PC-3 (cell line): ENCODE measurements at regions of chr17 and their contacts with region 1.

Region 1: DNA sequence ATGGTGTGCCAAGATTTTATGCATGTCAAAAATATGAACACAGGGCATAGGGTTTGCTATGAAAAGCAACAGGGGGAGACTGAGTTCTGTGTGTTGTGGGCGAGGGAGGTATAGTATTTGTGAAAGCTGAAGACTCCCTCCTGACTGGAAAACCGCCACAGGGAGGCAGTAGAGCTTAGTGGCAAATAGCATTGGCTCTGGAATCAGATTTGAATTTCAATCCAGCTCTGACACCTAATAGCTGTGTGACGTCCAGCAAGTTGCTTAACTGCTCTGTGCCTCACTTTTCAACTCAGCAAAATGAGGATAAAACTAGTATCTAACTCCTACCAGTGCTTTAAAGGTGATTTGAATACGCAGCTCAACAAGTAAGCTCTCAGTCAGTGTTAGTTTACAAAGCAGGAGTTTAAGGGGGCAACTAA is 22.0 kb downstream of the KPNA2 start:
- DNase-seq: peak; percentile 61
- ATAC-seq: peak; percentile 82
- H3K4me3 ChIP-seq: no peak overlapping the region
- H3K27ac ChIP-seq: no peak overlapping the region
- H3K4me1 ChIP-seq: no peaks in the 10 kb centered on the region
- H3K27me3 ChIP-seq: no peaks in the 10 kb centered on the region
- CTCF ChIP-seq: peak; percentile 74

Region 2: DNA sequence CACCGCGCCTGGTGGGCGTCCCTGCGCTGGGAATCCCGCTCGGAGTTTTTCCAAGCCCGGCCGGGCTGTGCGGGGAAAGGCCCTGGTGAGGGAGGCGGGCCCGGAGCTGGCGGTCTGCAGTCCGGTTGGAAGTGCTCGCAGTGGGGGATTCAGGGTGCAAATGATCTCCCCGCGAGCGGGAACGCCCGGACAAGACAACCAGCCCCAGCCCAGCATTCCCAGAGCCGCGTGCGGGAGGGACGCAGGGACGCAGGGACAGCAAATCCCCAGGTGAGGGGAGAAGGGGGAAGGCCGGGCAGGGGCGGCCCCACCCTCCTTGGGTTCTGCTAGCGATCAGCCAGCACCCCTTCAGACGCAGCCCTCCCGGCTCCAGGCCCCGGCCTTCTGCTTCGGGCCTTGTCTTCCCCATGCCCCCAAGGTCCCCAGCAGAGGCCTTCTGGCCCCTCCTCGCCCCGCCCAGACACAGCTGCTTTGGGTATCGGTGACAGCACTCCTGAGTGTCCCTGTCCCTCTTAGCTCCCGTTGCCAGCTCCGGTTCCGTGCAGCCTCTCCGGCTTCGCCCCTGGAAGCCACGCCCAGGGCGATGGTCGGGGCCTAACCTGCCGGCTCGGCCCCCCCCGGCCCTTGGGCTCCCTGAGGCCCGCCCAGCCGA is 139.5 kb after region 1 on chr17:
- CTCF ChIA-PET with region 1: interaction called, 3 read pairs
- POLR2A ChIA-PET with region 1: no interaction called
- intact Hi-C with region 1: loop called (anchors 10 kb)
- DNase-seq: peak; percentile 37
- ATAC-seq: peak; percentile 7; the same call in 1 of the 2 replicates
- H3K4me3 ChIP-seq: peak overlapping the region; percentile 60
- H3K27ac ChIP-seq: no peak overlapping the region
- H3K4me1 ChIP-seq: peaks cover 28% of the 10 kb centered on the region
- H3K27me3 ChIP-seq: peaks cover 56% of the 10 kb centered on the region
- CTCF ChIP-seq: no peak

Region 3: DNA sequence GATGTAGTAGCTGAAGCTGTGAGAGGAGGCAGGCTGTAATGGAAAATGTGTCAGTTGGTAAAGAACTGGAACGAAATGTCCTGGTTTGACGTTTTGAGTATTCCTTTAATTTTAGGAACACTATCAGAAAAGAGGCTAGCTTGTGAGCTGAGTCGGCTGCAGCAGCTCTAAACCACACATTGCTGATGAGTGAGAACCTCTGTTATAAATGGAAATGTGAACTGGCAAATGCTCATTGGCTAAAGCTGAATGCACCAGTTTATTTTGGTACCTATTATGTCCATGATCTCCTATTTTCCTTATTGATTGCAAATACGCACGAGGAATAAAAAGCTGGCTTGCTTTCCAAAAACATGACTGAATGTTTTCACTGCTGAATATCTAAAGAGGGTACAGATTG is 410.8 kb after region 1 on chr17:
- CTCF ChIA-PET with region 1: no interaction called
- POLR2A ChIA-PET with region 1: no interaction called
- intact Hi-C with region 1: loop called (anchors 5 kb)
- DNase-seq: no peak
- ATAC-seq: no peak
- H3K4me3 ChIP-seq: no peak overlapping the region
- H3K27ac ChIP-seq: no peak overlapping the region
- H3K4me1 ChIP-seq: no peaks in the 10 kb centered on the region
- H3K27me3 ChIP-seq: no peaks in the 10 kb centered on the region; the same call in 1 of the 2 replicates
- CTCF ChIP-seq: no peak